ENCODE measurements at regions of chr2 and their contacts with region 1.

Region 1: GRCh38 chr2:14634201-14634884 is 1.8 kb downstream of the LRATD1 start:
- DNase-seq: peak; percentile 87
- ATAC-seq: peak; percentile 77

Region 2: DNA sequence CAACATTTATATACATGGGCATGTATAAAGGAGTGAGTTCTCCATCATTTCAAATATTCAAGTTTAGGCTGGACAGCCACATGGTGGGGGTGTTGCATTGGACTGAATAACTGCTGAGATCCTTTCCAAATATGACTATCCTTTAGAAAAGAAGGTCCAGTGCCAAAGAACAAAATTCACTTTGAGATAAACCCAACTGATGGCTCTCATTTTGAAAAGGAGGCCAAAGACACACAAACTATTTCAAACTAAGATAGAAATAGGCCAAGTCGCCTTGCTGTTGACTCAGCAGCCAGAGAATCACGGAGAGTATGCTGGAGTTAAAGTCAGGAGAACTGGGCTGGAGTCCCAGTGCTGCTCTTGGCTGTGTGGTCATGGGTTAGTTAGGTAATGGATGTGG is 206.3 kb before region 1 on chr2:
- intact Hi-C with region 1: loop called (anchors 5 kb)
- DNase-seq: no peak
- ATAC-seq: peak; percentile 59

Region 3: DNA sequence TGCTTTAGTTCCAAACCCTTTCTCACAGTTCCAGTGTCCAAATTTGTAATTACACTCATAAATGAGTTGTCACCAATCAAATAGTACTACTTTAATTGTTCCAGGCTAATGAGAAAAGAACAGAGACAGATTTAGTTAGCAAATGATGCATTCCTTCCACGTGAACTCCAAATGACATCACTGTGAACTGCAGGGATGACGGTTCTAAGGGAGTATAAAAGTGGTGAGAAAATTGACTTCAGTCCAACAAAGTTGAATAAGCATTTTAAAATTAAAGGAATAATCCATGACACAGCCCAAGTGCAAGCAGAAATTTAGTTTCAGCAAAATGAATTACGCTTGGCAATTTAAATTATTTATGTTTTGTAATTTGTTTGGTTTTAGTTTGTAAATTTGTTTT is 103.8 kb before region 1 on chr2:
- intact Hi-C with region 1: loop called (anchors 5 kb)
- DNase-seq: no peak
- ATAC-seq: no peak

Region 4: DNA sequence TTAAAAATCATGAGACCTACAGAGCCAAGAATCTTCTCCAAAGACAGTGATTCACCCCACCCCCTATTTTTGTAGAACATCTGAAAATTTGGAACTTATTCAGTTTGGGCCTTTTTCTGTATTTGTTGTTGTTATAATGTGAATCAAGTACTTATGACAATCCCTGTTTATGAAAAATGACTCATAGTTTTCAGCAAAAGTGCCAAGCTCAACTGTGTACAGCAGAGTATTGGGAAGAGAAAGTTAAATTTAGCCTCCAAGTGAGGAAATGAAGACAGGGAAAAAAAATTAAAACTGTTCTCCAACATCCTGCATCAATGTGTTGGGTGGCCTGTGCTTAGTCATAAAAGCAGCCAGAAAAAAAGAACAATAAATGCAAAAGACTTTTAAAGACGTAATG is 44.4 kb after region 1 on chr2:
- intact Hi-C with region 1: no loop called
- DNase-seq: no peak
- ATAC-seq: no peak